ENCODE measurements at regions of chr11 and their contacts with region 1.

Region 1: GRCh38 chr11:2420502-2421225 is 20.1 kb downstream of the TSSC4 start:
- DNase-seq: peak; percentile 56
- H3K4me3 Mint-ChIP-seq: no peak overlapping the region
- H3K27ac Mint-ChIP-seq: no peak overlapping the region
- H3K4me1 Mint-ChIP-seq: no peaks in the 10 kb centered on the region
- H3K27me3 Mint-ChIP-seq: no peaks in the 10 kb centered on the region

Region 2: GRCh38 chr11:2186669-2187279 is 233.9 kb before region 1 on chr11:
- intact Hi-C with region 1: loop called (anchors 1 kb)
- DNase-seq: no peak
- H3K4me3 Mint-ChIP-seq: no peak overlapping the region
- H3K27ac Mint-ChIP-seq: no peak overlapping the region
- H3K4me1 Mint-ChIP-seq: no peaks in the 10 kb centered on the region
- H3K27me3 Mint-ChIP-seq: peaks cover 7% of the 10 kb centered on the region

Region 3: GRCh38 chr11:2196970-2197770 is 223.5 kb before region 1 on chr11:
- intact Hi-C with region 1: loop called (anchors 1 kb)
- DNase-seq: peak; percentile 55
- H3K4me3 Mint-ChIP-seq: no peak overlapping the region
- H3K27ac Mint-ChIP-seq: peak overlapping the region; percentile 6
- H3K4me1 Mint-ChIP-seq: no peaks in the 10 kb centered on the region
- H3K27me3 Mint-ChIP-seq: peaks cover 4% of the 10 kb centered on the region

Region 4: GRCh38 chr11:2223153-2223794 is 197.4 kb before region 1 on chr11:
- intact Hi-C with region 1: no loop called
- DNase-seq: no peak
- H3K4me3 Mint-ChIP-seq: no peak overlapping the region
- H3K27ac Mint-ChIP-seq: no peak overlapping the region
- H3K4me1 Mint-ChIP-seq: no peaks in the 10 kb centered on the region
- H3K27me3 Mint-ChIP-seq: peaks cover 29% of the 10 kb centered on the region

Region 5: GRCh38 chr11:2249189-2249916 is 171.3 kb before region 1 on chr11:
- intact Hi-C with region 1: no loop called
- DNase-seq: no peak
- H3K4me3 Mint-ChIP-seq: no peak overlapping the region
- H3K27ac Mint-ChIP-seq: no peak overlapping the region
- H3K4me1 Mint-ChIP-seq: no peaks in the 10 kb centered on the region
- H3K27me3 Mint-ChIP-seq: peaks cover 13% of the 10 kb centered on the region

Region 6: GRCh38 chr11:2474061-2474901 is 53.6 kb after region 1 on chr11:
- intact Hi-C with region 1: no loop called
- DNase-seq: no peak
- H3K4me3 Mint-ChIP-seq: no peak overlapping the region
- H3K27ac Mint-ChIP-seq: no peak overlapping the region
- H3K4me1 Mint-ChIP-seq: no peaks in the 10 kb centered on the region
- H3K27me3 Mint-ChIP-seq: peaks cover under 1% of the 10 kb centered on the region

Measured in activated T-helper 1 cell treated with anti-CD3 and anti-CD28 coated beads, Interleukin-12 subunit alpha, Interleukin-12 subunit beta, Interleukin-2, Interleukin-4 antibody, amounts not matched to agents 30 ng/mL and 10 ng/mL and 1 ng/mL, durations not matched to agents 14 hours and 24 hours and 36 hours (primary cell).